ENCODE measurements at regions of chr10 and their contacts with region 1.

Region 1: DNA sequence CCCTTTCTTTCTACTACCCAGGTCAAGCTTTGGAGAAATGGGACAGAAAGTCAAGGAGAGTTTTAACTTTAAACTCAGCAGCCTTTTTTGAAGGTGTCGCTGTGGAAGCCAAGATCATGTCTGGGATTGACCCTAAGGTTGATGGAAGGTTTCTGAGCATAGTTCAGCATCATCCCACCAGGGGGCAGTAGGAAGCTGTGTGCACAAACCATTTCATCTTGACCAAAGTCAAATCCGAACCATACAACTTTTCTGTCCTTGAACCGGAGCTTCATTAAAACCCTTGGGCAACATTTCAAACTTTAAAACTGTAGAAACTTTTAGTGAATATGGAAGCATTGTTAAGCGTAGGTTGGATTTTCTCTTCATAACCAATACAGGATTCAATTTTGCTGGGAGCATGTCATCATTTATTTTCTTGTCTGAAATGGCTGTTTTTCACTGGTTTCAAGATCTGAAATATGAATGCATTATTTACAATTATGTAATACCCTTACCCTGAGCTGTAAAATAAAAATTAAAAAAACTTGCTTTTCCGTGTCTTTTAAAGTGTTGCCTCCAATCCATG is 214.4 kb upstream of the KIAA1217 start:
- DNase-seq: no peak
- ATAC-seq: peak; percentile 83
- H3K4me3 ChIP-seq: no peak overlapping the region
- H3K27ac ChIP-seq: no peak overlapping the region
- H3K4me1 ChIP-seq: no peaks in the 10 kb centered on the region
- H3K27me3 ChIP-seq: no peaks in the 10 kb centered on the region
- CTCF ChIP-seq: peak; percentile 82

Region 2: DNA sequence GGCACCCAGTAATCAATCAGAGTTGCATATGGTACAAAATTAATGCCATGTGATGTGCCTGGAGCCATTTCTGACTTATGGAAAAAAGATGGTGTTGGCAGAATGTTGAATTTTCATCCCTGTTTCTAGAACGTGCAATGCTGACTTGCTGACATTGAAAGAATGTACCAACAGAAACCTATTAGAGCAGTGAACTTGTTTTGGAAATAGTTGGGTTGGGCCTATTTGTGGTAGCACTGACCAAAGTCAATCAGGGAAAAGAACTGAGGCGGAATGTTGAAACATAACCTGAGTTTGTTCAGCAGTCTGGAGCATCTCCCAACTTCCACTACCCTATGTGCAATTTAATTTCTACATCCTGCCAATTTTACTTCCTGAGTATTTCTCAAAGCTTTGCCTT is 202.7 kb after region 1 on chr10:
- intact Hi-C with region 1: loop called (anchors 10 kb)
- DNase-seq: no peak
- ATAC-seq: no peak
- H3K4me3 ChIP-seq: no peak overlapping the region
- H3K27ac ChIP-seq: no peak overlapping the region
- H3K4me1 ChIP-seq: no peaks in the 10 kb centered on the region
- H3K27me3 ChIP-seq: no peaks in the 10 kb centered on the region
- CTCF ChIP-seq: no peak

Region 3: GRCh38 chr10:24360282-24361127 is 365.9 kb after region 1 on chr10:
- intact Hi-C with region 1: loop called (anchors 10 kb)
- DNase-seq: no peak
- ATAC-seq: peak; percentile 78
- H3K4me3 ChIP-seq: no peak overlapping the region
- H3K27ac ChIP-seq: no peak overlapping the region
- H3K4me1 ChIP-seq: no peaks in the 10 kb centered on the region
- H3K27me3 ChIP-seq: no peaks in the 10 kb centered on the region
- CTCF ChIP-seq: peak; percentile 64

Measured in upper lobe of right lung (tissue), 1 donor.